ENCODE measurements at regions of chr1 and their contacts with region 1.

Region 1: GRCh38 chr1:161225534-161226319 is at the start of gene TOMM40L:
- DNase-seq: peak; percentile 95 to 98
- ATAC-seq: peak; percentile 96 to 98
- H3K4me3 ChIP-seq: peak within 1 kb of the TSS; percentile 62 to 93 (median 87)
- H3K27ac ChIP-seq: peak within 1 kb of the TSS; percentile 76 to 92 (median 90)
- H3K4me1 ChIP-seq: peaks cover 14 to 21% of the 10 kb centered on the region in 2 donors
- H3K27me3 ChIP-seq: no peaks in the 10 kb centered on the region
- CTCF ChIP-seq: peak; percentile 47 to 64 (median 53)
- POLR2A ChIP-seq: peak; percentile 21 to 27
- total RNA-seq, gene TOMM40L: 8.3 to 22.7 (median 16.9) TPM

Region 2: GRCh38 chr1:161045750-161046571 is 179.8 kb before region 1 on chr1 and contains the start of gene USF1:
- in situ Hi-C with region 1: no loop called
- intact Hi-C with region 1: loop called (anchors 2 kb)
- DNase-seq: peak; percentile 85 to 93
- ATAC-seq: peak; percentile 97
- H3K4me3 ChIP-seq: peak within 1 kb of the TSS; percentile 87 to 99 (median 90)
- H3K27ac ChIP-seq: peak within 1 kb of the TSS; percentile 88 to 98 (median 94)
- H3K4me1 ChIP-seq: peaks cover 17 to 21% of the 10 kb centered on the region in 2 donors
- H3K27me3 ChIP-seq: no peaks in the 10 kb centered on the region
- CTCF ChIP-seq: no peak
- POLR2A ChIP-seq: peak in 1 of 2 donors; percentile 68
- total RNA-seq, gene USF1: 41.9 to 55.1 (median 49.1) TPM

Region 3: DNA sequence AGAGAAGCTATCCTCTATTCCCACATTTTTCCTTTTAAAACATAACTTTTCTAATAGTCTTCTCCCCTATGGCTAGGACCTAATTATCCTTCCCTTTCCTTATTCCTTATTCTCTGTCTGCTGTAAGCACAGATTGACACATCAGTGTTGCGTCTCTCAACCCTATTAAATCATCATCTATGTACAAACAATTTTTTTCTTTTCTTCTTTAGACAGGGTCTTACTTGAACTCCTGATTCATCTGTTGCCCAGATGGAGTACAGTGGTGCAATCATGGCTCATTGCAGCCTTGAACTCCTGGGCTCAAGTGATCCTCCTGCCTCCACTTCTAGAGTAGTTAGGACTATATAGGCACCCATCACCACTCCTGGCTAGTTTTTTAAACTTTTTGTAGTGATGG is 119.3 kb before region 1 on chr1:
- in situ Hi-C with region 1: no loop called
- intact Hi-C with region 1: no loop called
- DNase-seq: no peak
- ATAC-seq: no peak
- H3K4me3 ChIP-seq: no peak overlapping the region
- H3K27ac ChIP-seq: no peak overlapping the region
- H3K4me1 ChIP-seq: no peaks in the 10 kb centered on the region
- H3K27me3 ChIP-seq: no peaks in the 10 kb centered on the region
- CTCF ChIP-seq: no peak
- POLR2A ChIP-seq: no peak

Region 4: DNA sequence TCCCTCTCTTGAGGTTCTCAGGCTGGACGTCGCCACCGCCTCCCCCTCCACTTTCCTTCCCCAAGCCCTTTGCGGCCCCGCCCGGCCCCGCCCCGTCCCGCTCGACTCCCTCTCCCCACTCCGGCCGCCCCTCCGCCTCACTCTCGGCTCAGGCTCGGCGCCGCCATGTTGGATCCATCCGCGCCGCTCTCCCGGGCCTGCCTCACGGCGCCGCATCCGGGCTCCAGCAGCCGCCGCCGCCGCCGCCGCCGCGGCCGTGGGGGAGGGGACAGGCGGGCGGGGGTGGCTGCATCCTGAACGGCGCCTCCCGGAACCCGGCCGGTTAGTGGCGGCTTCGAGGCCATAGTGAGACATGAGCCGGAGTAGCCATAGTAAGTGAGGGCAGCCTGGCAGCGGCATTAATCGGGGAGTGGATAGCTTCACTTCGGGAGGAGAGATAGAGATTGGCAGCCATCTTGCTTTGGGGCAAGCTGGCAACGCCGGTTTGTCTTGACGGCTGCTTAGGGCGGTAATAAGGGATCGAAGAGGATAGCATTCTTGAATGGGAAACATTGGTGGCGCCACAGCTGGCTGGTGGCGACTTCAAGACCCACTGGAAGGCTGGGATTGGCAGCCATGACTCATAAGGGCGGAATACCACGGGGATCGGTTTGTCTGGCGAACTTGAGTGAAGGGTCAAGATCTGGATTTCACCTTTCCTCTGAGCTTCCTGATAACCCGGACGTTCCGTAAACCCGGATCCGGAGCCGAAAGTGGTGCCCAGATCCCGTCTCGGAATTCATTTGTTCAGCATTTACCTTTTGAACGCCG is 93.1 kb before region 1 on chr1 and contains the start of gene DEDD:
- in situ Hi-C with region 1: no loop called
- intact Hi-C with region 1: loop called (anchors 2 kb)
- DNase-seq: peak; percentile 95 to 96
- ATAC-seq: peak; percentile 96 to 98
- H3K4me3 ChIP-seq: peak within 1 kb of the TSS; percentile 83 to 91 (median 84)
- H3K27ac ChIP-seq: peak within 1 kb of the TSS; percentile 94 to 98 (median 96)
- H3K4me1 ChIP-seq: peaks cover 55 to 56% of the 10 kb centered on the region in 2 donors
- H3K27me3 ChIP-seq: no peaks in the 10 kb centered on the region
- CTCF ChIP-seq: no peak
- POLR2A ChIP-seq: peak; percentile 65 to 68
- total RNA-seq, gene DEDD: 40.2 to 60.2 (median 46.3) TPM

Region 5: DNA sequence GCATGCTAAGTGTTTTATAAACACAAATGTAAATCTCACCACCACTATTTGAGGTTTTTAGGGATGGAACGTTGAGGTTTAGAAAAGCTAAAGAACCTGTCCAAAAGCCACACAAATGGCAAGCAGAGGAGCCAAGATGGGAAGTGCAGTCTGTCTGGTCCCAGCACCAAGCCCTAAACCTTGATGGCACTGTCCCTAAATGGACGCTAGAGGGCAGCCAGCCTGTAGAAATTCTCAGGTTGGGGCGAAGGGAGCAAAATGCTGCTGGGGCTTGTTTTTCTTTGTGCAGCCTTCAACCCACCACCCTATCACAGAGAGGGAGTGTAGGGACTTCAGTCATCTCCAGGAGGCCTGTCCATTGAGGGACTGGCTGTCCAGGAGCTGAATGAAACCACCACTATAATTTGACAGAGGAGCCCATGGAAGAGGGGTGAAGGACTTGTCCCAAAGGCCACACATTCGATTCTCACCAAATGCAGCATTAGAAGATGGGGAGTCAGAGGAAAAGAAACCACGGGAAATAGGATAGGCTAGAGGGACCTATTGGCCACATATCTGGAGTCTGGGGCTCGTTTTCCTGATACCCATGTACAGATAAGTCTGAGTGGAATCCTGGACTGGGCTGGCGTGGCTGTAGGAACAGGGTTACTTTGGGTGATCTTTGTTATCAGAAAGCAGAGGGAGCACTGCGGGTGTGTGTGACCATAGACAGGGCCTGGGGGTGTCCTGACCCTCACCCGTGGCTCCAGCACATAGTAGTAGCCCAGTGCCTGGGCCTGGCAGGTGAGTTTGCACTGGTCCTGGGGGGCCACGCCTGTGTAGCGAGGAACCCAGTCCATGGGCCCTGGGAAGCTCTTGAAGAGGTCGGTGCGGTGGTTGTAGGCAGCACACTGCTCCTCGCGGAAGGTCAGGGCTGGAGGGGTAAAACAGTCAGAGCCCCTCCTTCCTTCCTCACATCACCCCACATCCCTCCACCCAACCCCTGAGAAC is 33.0 kb before region 1 on chr1:
- in situ Hi-C with region 1: no loop called
- intact Hi-C with region 1: loop called (anchors 2 kb)
- DNase-seq: peak in 1 of 2 donors; percentile 57
- ATAC-seq: peak; percentile 75 to 82
- H3K4me3 ChIP-seq: no peak overlapping the region
- H3K27ac ChIP-seq: peak overlapping the region in 3 of 4 donors; percentile 54 to 94 (median 58)
- H3K4me1 ChIP-seq: peaks cover 9% of the 10 kb centered on the region in 2 donors
- H3K27me3 ChIP-seq: no peaks in the 10 kb centered on the region
- CTCF ChIP-seq: peak; percentile 71 to 89 (median 75)
- POLR2A ChIP-seq: no peak

Region 6: DNA sequence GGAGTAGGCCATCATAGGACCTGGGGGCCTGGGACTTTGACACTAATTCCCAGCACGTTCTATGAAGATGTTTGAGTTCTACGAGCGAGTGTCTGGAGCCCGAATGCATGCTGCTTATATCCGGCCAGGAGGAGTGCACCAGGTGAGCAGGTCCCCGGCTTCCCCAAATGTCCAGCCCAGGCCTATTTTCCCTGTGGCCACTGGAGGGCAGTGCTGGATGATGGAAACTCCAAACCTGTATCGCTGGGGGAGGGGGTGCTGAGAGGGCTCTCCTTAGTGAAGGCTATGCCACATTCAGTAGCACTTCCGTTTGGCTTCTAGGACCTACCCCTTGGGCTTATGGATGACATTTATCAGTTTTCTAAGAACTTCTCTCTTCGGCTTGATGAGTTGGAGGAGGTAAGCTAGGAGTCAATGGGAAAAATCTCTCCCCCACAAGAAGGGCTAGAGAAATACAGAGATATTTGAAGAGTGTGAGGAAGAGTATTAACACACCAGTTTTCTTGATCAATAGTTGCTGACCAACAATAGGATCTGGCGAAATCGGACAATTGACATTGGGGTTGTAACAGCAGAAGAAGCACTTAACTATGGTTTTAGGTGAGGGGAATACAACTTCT is 15.8 kb before region 1 on chr1:
- in situ Hi-C with region 1: no loop called
- intact Hi-C with region 1: loop called (anchors 1 kb)
- DNase-seq: peak; percentile 62 to 71
- ATAC-seq: peak; percentile 48 to 85
- H3K4me3 ChIP-seq: no peak overlapping the region
- H3K27ac ChIP-seq: peak overlapping the region; percentile 77 to 99 (median 96)
- H3K4me1 ChIP-seq: peaks cover 4 to 32% of the 10 kb centered on the region in 2 donors
- H3K27me3 ChIP-seq: no peaks in the 10 kb centered on the region
- CTCF ChIP-seq: peak; percentile 79 to 89 (median 84)
- POLR2A ChIP-seq: no peak

Region 7: GRCh38 chr1:161298116-161298515 is 72.4 kb after region 1 on chr1:
- in situ Hi-C with region 1: loop called in 1 of 4 experiments (anchors 10 kb)
- intact Hi-C with region 1: no loop called
- DNase-seq: no peak
- ATAC-seq: no peak
- H3K4me3 ChIP-seq: no peak overlapping the region
- H3K27ac ChIP-seq: no peak overlapping the region
- H3K4me1 ChIP-seq: no peaks in the 10 kb centered on the region
- H3K27me3 ChIP-seq: no peaks in the 10 kb centered on the region
- CTCF ChIP-seq: no peak
- POLR2A ChIP-seq: no peak

Region 8: DNA sequence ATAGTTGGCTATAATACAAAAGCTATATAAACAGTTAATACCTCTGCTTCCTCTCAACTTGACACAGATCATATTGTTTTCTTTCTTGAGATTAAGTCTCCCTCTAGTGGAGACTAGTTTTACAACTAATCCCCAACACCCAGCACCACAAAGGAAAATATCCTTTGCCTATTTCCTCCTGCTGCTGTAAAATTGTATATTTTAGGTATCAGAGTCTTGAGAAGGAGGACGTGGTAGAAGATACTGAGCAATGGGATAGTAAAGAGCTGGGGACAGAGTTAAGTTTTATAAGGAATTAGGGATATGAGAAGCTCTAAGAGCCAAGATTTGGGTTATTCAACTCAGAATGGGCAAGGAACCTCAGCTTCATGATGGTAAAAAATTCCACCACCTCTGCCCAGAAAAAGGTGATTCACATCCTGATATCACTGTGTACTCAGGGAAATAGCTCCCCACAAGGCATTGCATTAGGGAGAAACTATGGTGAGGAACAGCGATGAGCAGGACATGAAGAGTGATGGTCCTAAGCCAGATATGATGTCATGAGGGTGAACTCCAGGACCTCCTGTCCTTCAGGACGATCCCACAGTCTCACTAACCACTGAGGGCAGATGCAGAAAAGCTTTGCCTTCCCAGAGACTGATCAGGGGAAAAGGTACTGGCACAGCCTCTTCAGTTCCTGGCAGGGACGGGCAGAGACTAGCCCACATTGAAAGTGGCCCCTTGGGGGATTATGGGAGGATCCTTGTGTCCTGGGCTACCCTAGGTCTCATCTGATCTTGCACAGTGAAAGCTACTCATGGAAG is 156.7 kb after region 1 on chr1:
- in situ Hi-C with region 1: loop called (anchors 5 to 10 kb)
- intact Hi-C with region 1: loop called (anchors 1 kb)
- DNase-seq: no peak
- ATAC-seq: peak; percentile 85 to 93
- H3K4me3 ChIP-seq: no peak overlapping the region
- H3K27ac ChIP-seq: peak overlapping the region; percentile 29 to 49 (median 40)
- H3K4me1 ChIP-seq: peaks cover 0 to 3% of the 10 kb centered on the region in 2 donors
- H3K27me3 ChIP-seq: no peaks in the 10 kb centered on the region
- CTCF ChIP-seq: peak; percentile 40 to 69 (median 59)
- POLR2A ChIP-seq: no peak

Measured in gastrocnemius medialis (tissue), 4 donors.